SK-N-SH (cell line): ENCODE measurements at regions of chr17 and their contacts with region 1.

Region 1: DNA sequence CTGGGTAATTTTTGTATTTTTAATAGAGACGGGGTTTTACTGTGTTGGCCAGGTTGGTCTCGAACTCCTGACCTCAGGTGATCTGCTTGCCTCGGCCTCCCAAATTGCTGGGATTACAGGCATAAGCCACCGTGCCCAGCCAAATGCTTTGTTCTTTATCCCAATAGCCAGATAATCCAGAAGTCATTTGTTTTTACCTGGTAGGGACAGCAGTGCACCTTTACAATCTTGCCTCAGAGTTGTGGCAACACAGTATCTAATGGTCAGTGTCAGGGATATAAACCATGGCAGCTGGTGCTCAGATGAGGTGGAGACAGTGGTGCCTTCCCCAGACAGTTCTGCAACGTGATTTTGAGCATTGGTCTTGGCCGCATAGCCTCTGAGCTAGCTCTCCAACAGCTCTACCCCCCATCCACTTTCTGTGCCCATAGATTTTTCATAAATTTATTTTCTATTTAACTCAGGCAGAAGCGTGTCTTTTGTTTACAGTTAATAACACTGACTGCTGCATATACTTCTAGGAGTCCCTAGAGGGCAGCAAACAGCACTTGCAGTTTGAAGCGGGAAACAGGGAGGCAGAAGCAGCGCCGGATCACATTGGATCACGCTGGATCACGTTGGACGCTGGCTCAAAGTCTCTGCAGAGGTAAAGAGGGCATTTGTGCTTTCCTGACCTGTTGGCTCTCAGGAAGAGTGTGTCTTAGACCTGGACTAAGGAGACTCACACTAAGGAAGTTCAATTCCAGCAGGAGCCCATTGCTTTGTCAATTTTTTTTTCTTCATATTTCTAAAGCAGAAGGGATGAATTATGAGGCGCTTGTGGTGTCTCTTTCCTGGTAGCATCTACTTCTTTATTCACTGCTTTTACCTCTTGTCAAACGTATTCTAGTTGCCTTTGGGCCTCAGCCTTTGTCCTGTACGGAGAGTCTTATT is 5.1 kb upstream of the GGT6 start:
- DNase-seq: peak; percentile 78
- H3K4me3 ChIP-seq: peak overlapping the region in 1 of 2 experiments; percentile 12; a peak in 1 of 4 replicates
- H3K27ac ChIP-seq: no peak overlapping the region
- H3K4me1 ChIP-seq: no peaks in the 10 kb centered on the region
- H3K27me3 ChIP-seq: peaks cover 5% of the 10 kb centered on the region; the same call in 1 of the 2 replicates
- CTCF ChIP-seq: peak; percentile 85
- EP300 ChIP-seq: no peak
- RAD21 ChIP-seq: peak; percentile 69

Region 2: GRCh38 chr17:4272213-4272971 is 293.1 kb before region 1 on chr17:
- CTCF ChIA-PET with region 1: no interaction called
- POLR2A ChIA-PET with region 1: no interaction called
- DNase-seq: no peak
- H3K4me3 ChIP-seq: no peak overlapping the region
- H3K27ac ChIP-seq: no peak overlapping the region
- H3K4me1 ChIP-seq: no peaks in the 10 kb centered on the region
- H3K27me3 ChIP-seq: no peaks in the 10 kb centered on the region
- CTCF ChIP-seq: no peak
- EP300 ChIP-seq: no peak
- RAD21 ChIP-seq: no peak

Region 3: GRCh38 chr17:4420692-4421131 is 144.8 kb before region 1 on chr17:
- CTCF ChIA-PET with region 1: interaction called, 28 read pairs
- POLR2A ChIA-PET with region 1: no interaction called
- DNase-seq: peak; percentile 81
- H3K4me3 ChIP-seq: no peak overlapping the region; a peak in 1 of 4 replicates
- H3K27ac ChIP-seq: no peak overlapping the region
- H3K4me1 ChIP-seq: peaks cover 0 to 2% of the 10 kb centered on the region in 2 experiments; a peak in 1 of 4 replicates
- H3K27me3 ChIP-seq: no peaks in the 10 kb centered on the region
- CTCF ChIP-seq: peak; percentile 78
- EP300 ChIP-seq: no peak
- RAD21 ChIP-seq: peak; percentile 91

Region 4: GRCh38 chr17:4583782-4584100 is 18.3 kb after region 1 on chr17:
- CTCF ChIA-PET with region 1: interaction called, 75 read pairs
- POLR2A ChIA-PET with region 1: no interaction called
- DNase-seq: peak; percentile 79
- H3K4me3 ChIP-seq: no peak overlapping the region
- H3K27ac ChIP-seq: no peak overlapping the region
- H3K4me1 ChIP-seq: peaks cover 0 to 23% of the 10 kb centered on the region in 2 experiments; a peak in 1 of 4 replicates
- H3K27me3 ChIP-seq: peaks cover 61% of the 10 kb centered on the region
- CTCF ChIP-seq: peak; percentile 39
- EP300 ChIP-seq: no peak
- RAD21 ChIP-seq: no peak

Region 5: GRCh38 chr17:4607773-4608187 is 42.3 kb after region 1 on chr17:
- CTCF ChIA-PET with region 1: interaction called, 59 read pairs
- POLR2A ChIA-PET with region 1: no interaction called
- DNase-seq: no peak
- H3K4me3 ChIP-seq: no peak overlapping the region
- H3K27ac ChIP-seq: no peak overlapping the region
- H3K4me1 ChIP-seq: peaks cover 0 to 9% of the 10 kb centered on the region in 2 experiments; a peak in 1 of 4 replicates
- H3K27me3 ChIP-seq: peaks cover 22% of the 10 kb centered on the region; the same call in 1 of the 2 replicates
- CTCF ChIP-seq: no peak
- EP300 ChIP-seq: no peak
- RAD21 ChIP-seq: no peak

Region 6: DNA sequence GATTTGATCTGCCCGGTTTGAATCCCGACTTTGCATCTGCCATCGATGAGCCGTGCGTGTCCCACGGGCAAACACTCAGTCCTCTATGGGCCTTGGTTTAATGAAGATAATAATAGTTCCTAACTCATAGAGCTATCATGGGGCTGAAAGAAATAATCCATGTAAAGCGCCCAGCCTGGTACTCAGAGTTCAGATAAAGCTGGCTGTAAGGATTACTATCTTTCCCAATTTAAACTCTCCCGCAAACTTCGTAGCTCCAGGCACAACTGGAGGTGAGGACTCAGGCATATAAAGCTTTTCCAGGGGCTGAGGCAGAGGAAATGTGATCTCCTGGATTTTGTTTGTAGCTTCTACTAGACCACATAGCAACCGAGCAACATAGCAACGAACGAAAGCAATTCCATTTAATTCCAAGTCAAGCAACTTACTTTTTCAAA is 59.7 kb after region 1 on chr17:
- CTCF ChIA-PET with region 1: interaction called, 237 read pairs
- POLR2A ChIA-PET with region 1: no interaction called
- DNase-seq: no peak
- H3K4me3 ChIP-seq: no peak overlapping the region
- H3K27ac ChIP-seq: no peak overlapping the region
- H3K4me1 ChIP-seq: no peaks in the 10 kb centered on the region
- H3K27me3 ChIP-seq: peaks cover 18% of the 10 kb centered on the region; the same call in 1 of the 2 replicates
- CTCF ChIP-seq: no peak
- EP300 ChIP-seq: no peak
- RAD21 ChIP-seq: no peak

Region 7: GRCh38 chr17:4648741-4649140 is 83.3 kb after region 1 on chr17:
- CTCF ChIA-PET with region 1: interaction called, 23 read pairs
- POLR2A ChIA-PET with region 1: no interaction called
- DNase-seq: no peak
- H3K4me3 ChIP-seq: no peak overlapping the region
- H3K27ac ChIP-seq: no peak overlapping the region
- H3K4me1 ChIP-seq: no peaks in the 10 kb centered on the region
- H3K27me3 ChIP-seq: peaks cover 21% of the 10 kb centered on the region
- CTCF ChIP-seq: no peak
- EP300 ChIP-seq: no peak
- RAD21 ChIP-seq: no peak